ENCODE measurements at regions of chr11 and their contacts with region 1.

Region 1: DNA sequence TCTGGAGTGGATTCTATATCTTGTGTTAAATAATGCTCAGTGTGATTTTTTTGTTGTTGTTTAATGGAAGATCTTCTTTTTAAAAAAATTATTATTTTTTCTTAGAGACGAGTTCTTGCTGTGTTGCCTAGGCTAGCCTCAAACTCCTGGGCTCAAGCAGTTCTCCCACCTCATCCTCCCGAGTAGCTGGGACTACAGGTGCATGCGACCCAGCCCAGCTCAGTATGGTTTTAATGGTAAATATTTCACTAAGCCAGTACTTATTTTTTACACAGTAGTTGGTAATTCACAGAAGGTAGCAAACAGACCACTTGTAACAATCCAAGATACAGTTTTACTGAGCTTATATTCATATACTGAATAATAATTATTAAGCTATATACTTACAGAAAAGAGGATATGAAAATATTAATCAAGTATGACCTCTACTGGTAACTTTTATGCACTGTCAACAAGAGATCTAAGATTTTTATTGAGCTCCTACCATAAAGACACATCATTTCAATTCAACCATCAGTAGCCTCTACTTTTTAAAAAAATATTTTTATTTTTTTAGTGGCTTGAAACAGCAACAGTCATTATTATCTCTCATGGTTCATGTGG is 6.1 kb upstream of the CD59 start:
- DNase-seq: no peak
- ATAC-seq: peak; percentile 36
- H3K4me3 ChIP-seq: no peak overlapping the region
- H3K4me1 ChIP-seq: no peaks in the 10 kb centered on the region
- CTCF ChIP-seq: no peak

Region 2: DNA sequence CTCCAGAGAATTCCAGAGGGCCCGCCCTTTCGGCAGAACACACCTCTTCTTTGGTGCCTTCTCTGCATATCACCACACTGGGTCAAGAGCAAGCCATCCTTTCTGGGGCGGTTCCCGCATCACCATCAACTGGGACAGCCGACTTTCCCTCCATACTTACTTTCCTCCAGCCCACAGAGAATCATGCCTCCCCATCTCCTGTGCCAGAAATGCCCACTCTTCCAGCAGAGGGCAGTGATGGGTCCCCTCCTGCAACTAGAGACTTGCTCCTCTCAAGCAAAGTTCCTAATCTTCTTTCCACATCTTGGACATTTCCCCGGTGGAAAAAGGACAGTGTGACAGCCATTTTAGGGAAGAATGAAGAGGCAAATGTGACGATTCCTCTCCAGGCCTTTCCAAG is 199.4 kb before region 1 on chr11:
- intact Hi-C with region 1: loop called in 1 of 2 experiments (anchors 10 kb)
- DNase-seq: peak in 2 of 3 donors; percentile 60 to 77
- ATAC-seq: peak; percentile 50
- H3K4me3 ChIP-seq: no peak overlapping the region
- H3K4me1 ChIP-seq: no peaks in the 10 kb centered on the region
- CTCF ChIP-seq: no peak

Region 3: GRCh38 chr11:33704240-33704983 is 37.9 kb before region 1 on chr11:
- intact Hi-C with region 1: no loop called
- DNase-seq: no peak
- ATAC-seq: no peak
- H3K4me3 ChIP-seq: no peak overlapping the region
- H3K4me1 ChIP-seq: peaks cover 32% of the 10 kb centered on the region
- CTCF ChIP-seq: no peak